ENCODE measurements at regions of chr10 and their contacts with region 1.

Region 1: GRCh38 chr10:128011175-128011979 is 104.5 kb downstream of the PTPRE start:
- DNase-seq: peak; percentile 92
- ATAC-seq: peak; percentile 89
- H3K4me3 Mint-ChIP-seq: peak overlapping the region; percentile 28
- H3K27ac Mint-ChIP-seq: no peak overlapping the region
- H3K4me1 Mint-ChIP-seq: peaks cover 7% of the 10 kb centered on the region
- H3K27me3 Mint-ChIP-seq: peaks cover 3% of the 10 kb centered on the region

Region 2: DNA sequence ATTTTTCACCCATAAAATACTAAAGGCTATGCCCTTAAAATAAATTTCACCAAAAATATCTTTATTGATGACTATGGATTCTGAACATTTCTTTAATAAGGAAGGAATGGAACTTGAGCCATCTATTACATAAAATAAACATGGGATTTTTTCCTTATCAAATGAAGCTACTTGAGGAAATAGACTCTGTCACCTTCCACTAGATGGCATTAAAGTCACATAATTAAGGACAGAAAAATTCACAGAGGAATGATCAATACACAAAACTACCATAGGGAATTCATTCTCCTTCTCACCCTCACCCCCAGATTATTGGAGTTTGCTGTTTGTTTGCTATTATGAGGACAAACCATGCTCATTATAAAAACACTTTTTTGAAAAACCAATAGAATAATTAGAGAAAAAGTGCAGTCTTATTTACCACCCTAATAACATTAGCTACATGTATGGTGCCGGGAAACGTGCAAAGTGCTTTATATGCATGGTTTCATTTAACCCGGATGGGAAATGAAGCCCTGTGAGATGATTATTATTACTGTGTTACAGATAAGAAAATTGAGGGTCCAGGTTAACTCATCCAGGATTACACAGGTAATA is 295.5 kb before region 1 on chr10:
- CTCF ChIA-PET with region 1: no interaction called
- POLR2A ChIA-PET with region 1: no interaction called
- intact Hi-C with region 1: loop called (anchors 5 kb)
- DNase-seq: no peak
- ATAC-seq: no peak
- H3K4me3 Mint-ChIP-seq: no peak overlapping the region
- H3K27ac Mint-ChIP-seq: no peak overlapping the region
- H3K4me1 Mint-ChIP-seq: no peaks in the 10 kb centered on the region
- H3K27me3 Mint-ChIP-seq: peaks cover 1% of the 10 kb centered on the region

Region 3: DNA sequence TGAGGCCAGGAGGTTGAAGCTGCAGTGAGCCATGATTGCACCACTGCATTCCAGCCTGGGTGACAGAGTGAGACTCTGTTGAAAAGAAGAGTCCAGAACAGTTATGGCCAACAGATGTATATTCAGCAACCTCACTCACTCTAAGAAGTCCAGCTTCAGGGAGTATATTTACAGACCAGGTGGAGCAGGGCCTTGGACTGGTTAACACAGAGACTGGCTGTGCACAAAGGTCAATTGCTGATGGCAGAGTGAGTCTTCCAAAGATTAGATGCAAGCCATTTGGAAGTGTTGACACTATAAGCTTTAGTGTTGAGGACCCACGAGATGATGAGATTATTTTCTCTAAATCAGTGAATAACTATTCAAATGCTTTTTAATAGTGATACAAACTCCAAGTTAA is 143.6 kb before region 1 on chr10:
- CTCF ChIA-PET with region 1: interaction called, 11 read pairs
- POLR2A ChIA-PET with region 1: no interaction called
- intact Hi-C with region 1: no loop called
- DNase-seq: no peak
- ATAC-seq: no peak
- H3K4me3 Mint-ChIP-seq: no peak overlapping the region
- H3K27ac Mint-ChIP-seq: no peak overlapping the region
- H3K4me1 Mint-ChIP-seq: no peaks in the 10 kb centered on the region
- H3K27me3 Mint-ChIP-seq: peaks cover 19% of the 10 kb centered on the region

Region 4: DNA sequence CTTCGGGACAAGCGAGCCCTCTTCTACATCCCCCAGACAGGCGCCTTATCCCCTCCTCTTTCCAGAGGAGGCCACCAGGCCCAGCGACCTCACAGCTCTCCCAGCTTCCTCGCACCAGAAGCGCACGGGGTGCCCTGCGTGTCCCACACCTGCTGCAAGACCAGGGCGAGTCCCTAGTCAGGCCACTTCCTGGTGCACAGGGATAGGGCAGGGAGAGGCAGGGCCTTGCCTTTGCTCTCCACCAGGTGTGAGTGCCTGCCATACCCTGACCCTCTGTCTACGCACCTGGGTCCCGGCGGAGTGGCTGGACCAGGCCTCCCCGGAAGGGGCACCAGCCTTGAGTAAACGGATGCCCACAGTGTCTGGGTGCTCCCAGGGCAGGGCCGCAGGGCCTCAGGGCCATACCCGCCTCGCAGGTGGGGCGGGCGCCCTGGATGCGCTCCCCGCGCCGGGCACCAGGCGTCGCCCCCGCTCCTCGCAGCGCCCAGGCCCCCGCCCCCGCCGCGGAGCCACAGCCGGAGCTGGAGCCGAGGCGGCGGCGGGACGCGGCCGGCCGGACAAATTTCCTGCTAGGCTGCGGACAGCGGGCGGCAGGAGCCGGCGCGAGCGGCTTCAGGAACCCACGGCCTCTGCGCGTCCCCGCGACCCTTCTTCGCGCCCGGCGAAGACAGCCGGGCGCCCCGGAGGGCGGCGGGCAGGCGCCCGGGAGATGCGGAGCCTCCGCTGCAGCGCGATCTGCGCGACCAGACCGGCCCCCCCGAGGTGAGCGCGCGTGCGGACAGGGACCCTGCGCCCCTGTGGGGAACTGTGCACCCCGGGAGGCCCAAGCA is 104.6 kb before region 1 on chr10 and contains the start of gene PTPRE:
- CTCF ChIA-PET with region 1: interaction called, 147 read pairs
- POLR2A ChIA-PET with region 1: interaction called, 5 read pairs
- intact Hi-C with region 1: loop called (anchors 1 kb)
- DNase-seq: peak; percentile 86
- ATAC-seq: peak; percentile 98
- H3K4me3 Mint-ChIP-seq: peak within 1 kb of the TSS; percentile 35
- H3K27ac Mint-ChIP-seq: peak within 1 kb of the TSS; percentile 59
- H3K4me1 Mint-ChIP-seq: no peaks in the 10 kb centered on the region
- H3K27me3 Mint-ChIP-seq: peaks cover 21% of the 10 kb centered on the region
- total RNA-seq, gene PTPRE: 23.0 to 31.6 TPM

Region 5: GRCh38 chr10:127952575-127952869 is 58.9 kb before region 1 on chr10:
- CTCF ChIA-PET with region 1: no interaction called
- POLR2A ChIA-PET with region 1: no interaction called
- intact Hi-C with region 1: no loop called
- DNase-seq: no peak
- ATAC-seq: no peak
- H3K4me3 Mint-ChIP-seq: no peak overlapping the region
- H3K27ac Mint-ChIP-seq: no peak overlapping the region
- H3K4me1 Mint-ChIP-seq: no peaks in the 10 kb centered on the region
- H3K27me3 Mint-ChIP-seq: no peaks in the 10 kb centered on the region

Region 6: DNA sequence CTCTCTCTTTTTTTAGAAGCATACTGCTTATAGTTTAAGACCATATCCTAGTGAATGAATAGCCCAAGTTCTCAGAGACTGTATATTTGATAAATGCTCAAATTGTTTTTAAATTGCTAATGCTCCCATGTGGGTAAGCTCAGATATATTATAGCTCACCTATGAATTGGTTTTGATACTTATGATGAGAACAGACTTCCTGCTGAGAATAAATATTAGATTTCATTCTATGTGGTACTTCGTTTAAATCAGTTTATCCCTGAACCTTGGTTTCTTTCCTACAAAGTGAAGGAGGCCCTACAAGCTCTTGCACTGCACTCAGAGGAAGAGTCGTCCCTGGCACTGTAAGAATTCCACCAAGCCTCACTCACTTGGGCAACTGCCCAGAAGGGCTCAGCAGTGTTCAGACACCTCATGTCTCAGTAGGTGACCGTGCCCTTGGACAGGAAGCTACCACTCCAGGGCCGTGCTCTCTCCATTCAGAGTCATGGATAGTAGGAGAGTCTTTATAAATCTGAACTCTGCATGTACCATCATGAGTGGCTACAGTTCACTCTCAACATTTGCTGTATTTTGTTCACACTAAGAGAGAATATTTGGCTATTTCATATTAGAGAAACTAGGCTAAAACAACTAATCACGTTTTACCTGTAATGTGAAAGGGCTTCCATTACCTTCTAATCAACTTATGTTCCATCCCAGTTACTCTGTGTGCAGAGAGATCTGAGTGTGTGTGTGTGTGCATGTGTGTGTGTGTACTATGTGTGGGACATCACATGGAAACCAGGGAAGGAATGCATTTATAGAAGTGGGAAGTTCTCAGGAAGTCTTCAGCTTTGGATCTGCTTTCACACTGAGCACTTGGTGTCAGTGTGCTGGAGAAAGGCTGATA is 10.7 kb before region 1 on chr10:
- CTCF ChIA-PET with region 1: interaction called, 19 read pairs
- POLR2A ChIA-PET with region 1: no interaction called
- intact Hi-C with region 1: no loop called
- DNase-seq: no peak
- ATAC-seq: no peak
- H3K4me3 Mint-ChIP-seq: no peak overlapping the region
- H3K27ac Mint-ChIP-seq: no peak overlapping the region
- H3K4me1 Mint-ChIP-seq: no peaks in the 10 kb centered on the region
- H3K27me3 Mint-ChIP-seq: peaks cover 20% of the 10 kb centered on the region

Region 7: DNA sequence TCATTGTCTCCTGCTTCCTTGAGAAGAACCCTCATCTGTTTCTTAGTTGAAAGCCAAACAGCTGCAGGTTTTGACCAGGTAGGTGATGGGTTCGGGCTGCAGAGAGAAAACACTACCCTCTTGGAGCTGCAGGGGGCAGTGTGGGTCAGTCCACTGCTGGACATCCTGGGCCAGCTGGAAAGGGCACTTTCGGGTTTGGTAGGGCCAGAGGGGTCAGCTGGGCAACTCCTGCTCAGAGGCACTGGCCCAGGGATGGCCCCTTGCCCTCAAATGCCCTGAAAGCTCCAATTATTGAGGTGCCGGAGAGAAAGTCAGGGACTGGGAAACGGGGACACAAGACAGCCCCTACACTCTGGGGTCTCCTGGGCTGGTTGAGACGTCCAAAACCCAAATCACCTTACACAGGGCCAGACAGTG is 24.2 kb after region 1 on chr10:
- CTCF ChIA-PET with region 1: interaction called, 16 read pairs
- POLR2A ChIA-PET with region 1: no interaction called
- intact Hi-C with region 1: no loop called
- DNase-seq: peak; percentile 81
- ATAC-seq: peak; percentile 88
- H3K4me3 Mint-ChIP-seq: no peak overlapping the region
- H3K27ac Mint-ChIP-seq: no peak overlapping the region
- H3K4me1 Mint-ChIP-seq: peaks cover 6% of the 10 kb centered on the region
- H3K27me3 Mint-ChIP-seq: no peaks in the 10 kb centered on the region

Region 8: DNA sequence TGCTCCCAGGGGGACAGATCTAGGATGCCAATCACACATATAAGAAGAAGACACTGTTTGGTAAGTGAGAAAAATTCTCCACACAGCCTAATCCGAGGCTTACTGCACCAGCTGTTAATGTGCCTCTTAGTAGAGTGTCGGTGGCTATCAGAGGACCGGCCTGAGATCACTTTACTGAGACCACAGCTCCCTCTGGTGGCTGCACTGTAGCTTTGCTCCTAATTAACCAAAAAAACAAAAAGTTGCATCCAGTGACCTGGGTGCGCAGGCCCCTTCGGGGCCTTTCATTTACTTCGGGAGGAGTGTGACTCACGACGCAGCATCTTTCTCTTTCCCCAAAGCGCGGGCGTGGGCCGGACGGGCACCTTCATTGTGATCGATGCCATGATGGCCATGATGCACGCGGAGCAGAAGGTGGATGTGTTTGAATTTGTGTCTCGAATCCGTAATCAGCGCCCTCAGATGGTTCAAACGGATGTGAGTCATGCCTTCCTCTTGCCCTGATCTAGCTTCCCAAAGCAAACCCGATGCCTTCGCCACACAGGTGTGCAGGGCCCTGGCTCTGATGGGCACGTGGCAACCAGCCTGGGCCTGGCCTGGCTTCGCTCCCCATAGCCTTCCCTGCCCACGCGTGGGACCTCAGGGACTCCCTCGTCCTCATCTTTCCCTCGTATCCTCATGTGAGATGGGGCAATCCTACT is 58.1 kb after region 1 on chr10:
- CTCF ChIA-PET with region 1: interaction called, 18 read pairs
- POLR2A ChIA-PET with region 1: interaction called, 12 read pairs
- intact Hi-C with region 1: loop called in 1 of 2 experiments (anchors 1 kb)
- DNase-seq: peak; percentile 91
- ATAC-seq: peak; percentile 35
- H3K4me3 Mint-ChIP-seq: no peak overlapping the region
- H3K27ac Mint-ChIP-seq: no peak overlapping the region
- H3K4me1 Mint-ChIP-seq: peaks cover 39% of the 10 kb centered on the region
- H3K27me3 Mint-ChIP-seq: no peaks in the 10 kb centered on the region

Region 9: GRCh38 chr10:128242641-128243040 is 231.3 kb after region 1 on chr10:
- CTCF ChIA-PET with region 1: no interaction called
- POLR2A ChIA-PET with region 1: no interaction called
- intact Hi-C with region 1: no loop called
- DNase-seq: no peak
- ATAC-seq: no peak
- H3K4me3 Mint-ChIP-seq: no peak overlapping the region
- H3K27ac Mint-ChIP-seq: no peak overlapping the region
- H3K4me1 Mint-ChIP-seq: no peaks in the 10 kb centered on the region
- H3K27me3 Mint-ChIP-seq: no peaks in the 10 kb centered on the region

Region 10: DNA sequence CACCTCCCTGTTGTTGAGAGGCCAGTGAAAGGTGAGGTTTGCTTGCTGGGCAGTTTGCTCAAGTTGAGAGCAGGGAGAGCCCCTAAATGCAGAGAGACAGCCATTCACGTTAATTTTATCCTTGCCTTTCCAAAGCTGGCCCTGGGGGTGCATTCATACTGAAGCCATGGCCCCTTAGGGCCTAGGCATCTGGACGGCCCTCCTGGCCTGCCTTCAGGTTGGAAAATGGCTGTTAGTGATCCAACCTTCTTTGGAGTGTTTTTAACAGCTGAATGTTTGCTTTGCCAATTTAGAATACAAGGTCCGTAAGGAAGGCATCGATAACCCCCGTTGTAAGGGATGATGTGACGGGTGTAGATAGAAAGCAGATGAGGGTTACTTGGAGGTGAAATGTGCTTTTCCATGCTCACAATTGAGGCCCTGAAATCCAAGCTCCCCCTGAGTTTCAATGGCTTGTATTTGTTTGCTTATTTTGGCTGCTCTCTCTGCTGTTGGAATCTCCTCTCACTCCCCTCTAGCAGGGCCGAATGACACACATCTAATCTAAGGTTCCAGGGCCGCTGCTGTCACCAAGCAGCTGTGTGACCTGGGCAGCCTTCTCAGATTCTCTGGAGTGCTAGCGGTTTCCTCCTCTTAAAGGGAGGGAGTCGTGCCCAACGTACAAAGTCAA is 286.5 kb after region 1 on chr10:
- CTCF ChIA-PET with region 1: no interaction called
- POLR2A ChIA-PET with region 1: no interaction called
- intact Hi-C with region 1: no loop called
- DNase-seq: no peak
- ATAC-seq: no peak
- H3K4me3 Mint-ChIP-seq: no peak overlapping the region
- H3K27ac Mint-ChIP-seq: no peak overlapping the region
- H3K4me1 Mint-ChIP-seq: no peaks in the 10 kb centered on the region
- H3K27me3 Mint-ChIP-seq: no peaks in the 10 kb centered on the region